Activated B cell treated with CpG ODN at 0.5 μM for 24 hours (primary cell): ENCODE measurements at regions of chr12 and their contacts with region 1.

Region 1: DNA sequence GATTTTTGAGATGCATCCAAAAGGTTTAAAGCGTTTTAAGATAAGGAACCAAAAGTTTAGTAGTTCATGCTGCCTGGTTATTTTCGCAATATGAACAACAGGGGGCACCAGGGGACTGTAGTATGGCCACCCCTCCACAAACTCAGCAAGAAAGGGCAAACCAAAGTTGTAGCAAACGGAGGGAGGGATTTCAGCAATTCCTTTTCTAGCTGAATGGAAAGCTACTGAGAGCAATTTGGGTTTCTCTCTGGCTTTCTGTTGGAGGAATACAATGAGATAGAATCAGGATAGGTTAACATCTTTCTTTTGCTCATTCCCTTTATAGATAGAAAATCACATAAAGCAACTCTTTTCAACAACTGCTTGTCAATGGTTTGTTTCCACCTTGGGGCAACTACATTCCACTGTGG is 62.5 kb downstream of the DRAM1 start:
- DNase-seq: no peak
- ATAC-seq: peak; percentile 45
- H3K4me3 Mint-ChIP-seq: peak overlapping the region; percentile 13
- H3K27ac Mint-ChIP-seq: peak overlapping the region; percentile 74
- H3K4me1 Mint-ChIP-seq: peaks cover 62% of the 10 kb centered on the region
- H3K27me3 Mint-ChIP-seq: no peaks in the 10 kb centered on the region
- CTCF ChIP-seq: peak; percentile 21

Region 2: DNA sequence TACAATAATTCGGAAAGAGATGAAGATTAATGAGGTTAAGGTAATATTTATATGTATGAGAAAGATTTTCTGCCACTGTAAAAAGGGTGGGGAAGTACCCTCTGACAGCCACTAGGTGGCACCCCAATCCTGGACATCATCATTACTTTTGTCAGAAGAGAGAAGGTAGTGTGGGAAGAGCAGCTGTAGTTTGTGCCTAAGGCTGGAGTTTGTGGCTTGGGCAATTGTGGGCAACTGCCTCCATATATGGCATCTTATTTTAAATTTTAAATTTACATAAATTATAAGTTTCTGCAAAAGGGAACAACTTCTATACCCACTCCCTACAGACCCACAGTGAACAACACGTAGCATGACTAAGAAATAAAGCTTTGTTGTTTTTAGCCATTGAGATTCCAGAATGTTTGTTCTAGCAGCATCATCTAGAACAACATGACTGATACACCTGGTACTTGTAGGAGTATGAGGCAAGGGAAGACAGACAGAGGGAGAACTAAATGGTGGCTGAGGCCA is 166.2 kb before region 1 on chr12:
- CTCF ChIA-PET with region 1: interaction called, 8 read pairs
- POLR2A ChIA-PET with region 1: no interaction called
- intact Hi-C with region 1: loop called (anchors 5 kb)
- DNase-seq: peak; percentile 27
- ATAC-seq: peak; percentile 92
- H3K4me3 Mint-ChIP-seq: no peak overlapping the region
- H3K27ac Mint-ChIP-seq: no peak overlapping the region
- H3K4me1 Mint-ChIP-seq: peaks cover 2% of the 10 kb centered on the region
- H3K27me3 Mint-ChIP-seq: no peaks in the 10 kb centered on the region
- CTCF ChIP-seq: peak; percentile 95

Region 3: DNA sequence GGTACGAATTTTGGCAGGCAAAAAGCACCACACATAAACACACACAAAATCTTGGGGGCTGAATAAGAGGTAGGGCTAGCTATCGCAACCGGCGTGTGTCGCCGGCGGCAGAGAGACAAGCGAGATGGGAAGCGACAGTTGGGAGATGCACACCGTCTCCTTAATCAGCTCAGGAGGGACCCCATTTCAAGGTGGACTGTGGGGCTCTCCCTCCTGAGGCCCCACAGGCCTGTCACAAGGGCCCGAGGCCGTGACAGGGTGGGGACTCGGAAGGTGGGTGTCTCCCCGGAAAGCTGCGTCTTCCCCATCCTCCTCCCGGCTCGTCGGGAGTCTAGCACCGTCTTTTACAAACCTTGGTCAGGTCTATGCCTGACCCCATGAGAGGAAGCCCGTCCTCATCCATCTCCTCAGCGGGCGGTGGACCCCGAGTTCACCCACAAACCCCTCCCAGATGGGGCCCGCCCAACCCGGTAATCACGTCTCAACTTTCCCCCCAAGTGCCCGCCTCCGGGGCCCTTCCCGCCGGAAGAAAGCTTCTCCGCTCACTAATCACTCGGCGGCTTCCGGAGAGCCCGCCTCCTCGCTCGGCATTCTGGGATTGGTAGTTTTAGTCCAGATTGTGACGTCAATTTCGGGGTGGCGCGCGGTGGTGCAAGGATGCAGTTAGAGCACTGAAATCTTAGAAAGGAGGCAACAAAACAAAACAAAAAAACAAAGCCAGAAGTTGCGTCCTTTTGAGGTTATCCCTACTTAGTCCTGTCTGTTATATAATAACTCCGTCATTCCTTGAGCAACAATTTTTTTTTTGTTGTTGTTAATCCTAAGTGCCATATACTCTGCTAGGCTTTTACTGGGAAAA is 121.9 kb after region 1 on chr12 and contains the start of gene WASHC3:
- CTCF ChIA-PET with region 1: no interaction called
- POLR2A ChIA-PET with region 1: interaction called, 19 read pairs
- intact Hi-C with region 1: loop called (anchors 2 kb)
- DNase-seq: peak; percentile 89
- ATAC-seq: peak; percentile 95
- H3K4me3 Mint-ChIP-seq: peak within 1 kb of the TSS; percentile 98
- H3K27ac Mint-ChIP-seq: peak within 1 kb of the TSS; percentile 97
- H3K4me1 Mint-ChIP-seq: peaks cover 21% of the 10 kb centered on the region
- H3K27me3 Mint-ChIP-seq: no peaks in the 10 kb centered on the region
- CTCF ChIP-seq: no peak
- total RNA-seq, gene WASHC3: 47.3 and 50.6 TPM in 2 replicates

Region 4: DNA sequence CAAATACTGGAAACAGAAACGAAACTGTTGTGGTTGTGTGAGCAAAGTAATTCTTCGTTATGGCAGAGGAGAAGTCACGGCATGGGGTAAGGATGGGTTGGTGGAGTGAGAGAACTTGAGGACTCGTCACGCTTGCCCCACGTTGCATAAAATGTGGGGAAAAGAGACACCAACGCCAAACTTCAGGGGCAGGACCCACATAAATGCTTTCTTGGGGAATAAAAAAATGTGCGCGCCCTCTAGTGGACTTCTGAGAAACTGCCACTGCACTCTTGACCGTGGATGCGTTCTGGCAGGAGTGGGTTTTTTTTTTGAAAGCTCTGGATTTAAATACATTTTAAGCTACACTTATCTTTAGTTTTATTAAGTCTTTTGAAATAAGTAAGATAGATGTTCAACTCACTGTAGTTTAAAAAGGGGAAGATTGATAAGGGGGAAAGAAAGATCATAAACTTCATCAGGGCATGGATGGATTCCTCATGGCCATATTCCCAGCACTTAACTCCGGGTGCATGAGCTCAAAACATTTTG is 544.6 kb after region 1 on chr12:
- CTCF ChIA-PET with region 1: interaction called, 23 read pairs
- POLR2A ChIA-PET with region 1: interaction called, 6 read pairs
- intact Hi-C with region 1: loop called (anchors 1 kb)
- DNase-seq: peak; percentile 23
- ATAC-seq: peak; percentile 78
- H3K4me3 Mint-ChIP-seq: peak overlapping the region; percentile 70
- H3K27ac Mint-ChIP-seq: peak overlapping the region; percentile 87
- H3K4me1 Mint-ChIP-seq: peaks cover 23% of the 10 kb centered on the region
- H3K27me3 Mint-ChIP-seq: no peaks in the 10 kb centered on the region
- CTCF ChIP-seq: peak; percentile 87

Region 5: DNA sequence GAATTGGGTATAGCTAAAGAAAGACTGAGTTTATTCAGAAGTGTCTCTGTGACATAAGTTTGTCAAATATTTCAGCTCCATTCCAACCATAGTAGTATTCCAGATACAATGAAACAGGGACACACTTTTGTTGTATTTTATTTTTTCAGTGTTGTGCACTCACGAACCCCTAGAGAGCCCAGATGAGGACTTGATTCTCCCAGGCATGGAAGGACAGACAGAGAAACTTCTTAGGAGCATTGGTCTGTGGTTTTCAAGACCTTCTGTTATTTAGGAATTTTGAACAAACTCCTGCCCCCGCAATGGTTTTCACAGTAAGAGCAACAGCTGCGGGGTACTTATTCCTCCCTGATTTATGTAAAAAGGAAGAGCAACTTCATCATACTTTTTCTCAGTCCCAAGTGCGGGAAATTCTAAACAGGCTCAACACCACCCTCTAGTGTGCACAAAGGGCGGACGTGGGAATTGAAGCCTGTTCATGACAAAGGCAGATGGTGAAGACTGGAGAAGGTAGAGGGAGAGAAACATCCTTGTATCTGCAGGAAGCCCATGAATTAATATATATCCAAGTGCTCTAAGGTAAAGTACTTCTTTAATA is 829.6 kb after region 1 on chr12:
- CTCF ChIA-PET with region 1: interaction called, 3 read pairs
- POLR2A ChIA-PET with region 1: no interaction called
- intact Hi-C with region 1: loop called (anchors 1 kb)
- DNase-seq: no peak
- ATAC-seq: peak; percentile 71
- H3K4me3 Mint-ChIP-seq: no peak overlapping the region
- H3K27ac Mint-ChIP-seq: no peak overlapping the region
- H3K4me1 Mint-ChIP-seq: peaks cover 2% of the 10 kb centered on the region
- H3K27me3 Mint-ChIP-seq: peaks cover 10% of the 10 kb centered on the region
- CTCF ChIP-seq: no peak